Dorsolateral prefrontal cortex (tissue), 120 donors: ENCODE measurements at regions of chr6 and their contacts with region 1.

Region 1: DNA sequence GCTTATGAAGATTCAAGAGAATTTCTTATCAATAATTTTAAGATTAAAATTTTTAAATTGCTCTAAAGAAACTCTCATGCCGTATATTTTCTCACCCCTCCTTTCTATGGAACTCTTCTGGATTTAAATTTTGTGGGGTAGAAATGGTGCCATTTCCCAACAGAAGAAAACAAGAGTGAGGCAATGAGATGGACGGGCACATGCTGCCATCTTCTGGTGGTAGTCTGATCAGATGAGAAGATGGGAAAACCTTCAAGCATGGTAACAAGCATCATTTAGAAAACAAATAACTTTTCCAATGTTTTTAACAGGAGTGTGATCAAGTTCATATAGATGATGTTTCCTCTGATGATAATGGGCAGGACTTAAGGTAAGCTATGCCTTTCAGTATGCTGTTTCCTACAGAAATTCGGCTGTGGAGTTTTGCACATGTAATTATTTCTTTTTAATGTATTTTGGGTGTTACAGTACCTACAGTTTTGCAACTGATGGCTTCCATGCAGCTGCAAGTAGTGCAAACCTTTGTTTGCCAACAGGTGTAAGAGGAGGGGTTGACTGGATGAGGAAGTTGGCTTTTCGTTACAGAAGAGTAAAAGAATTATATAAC is 271.4 kb downstream of the EYA4 start:
- DNase-seq: peak in 9 of 10 donors; percentile 24 to 77 (median 57)
- H3K4me3 ChIP-seq: no peak overlapping the region
- H3K27ac ChIP-seq: no peak overlapping the region
- H3K27me3 ChIP-seq: peaks cover 0 to 5% (median 0%) of the 10 kb centered on the region in 45 donors
- CTCF ChIP-seq: peak; percentile 35 to 97 (median 81)

Region 2: DNA sequence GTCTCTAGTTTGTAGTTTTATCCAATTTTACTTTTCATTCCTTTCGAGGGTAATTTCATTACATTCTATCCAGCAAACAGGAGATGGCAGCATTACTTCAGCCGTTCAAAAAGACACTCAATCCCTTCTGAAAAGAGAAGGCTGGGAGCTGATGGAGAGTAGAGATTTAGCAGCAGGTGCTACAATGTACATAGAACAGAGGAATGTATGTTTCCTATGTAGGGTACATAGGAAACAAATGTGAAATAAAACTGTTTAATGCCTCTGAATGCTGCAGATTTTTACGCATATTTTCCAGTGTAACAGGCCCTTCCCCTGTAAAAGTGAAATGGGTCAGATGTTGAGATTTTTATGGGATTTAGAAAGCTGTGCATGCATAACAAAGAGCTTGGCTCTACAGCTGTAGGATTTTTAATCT is 682.2 kb before region 1 on chr6:
- intact Hi-C with region 1: loop called (anchors 5 kb)
- DNase-seq: no peak
- H3K4me3 ChIP-seq: no peak overlapping the region
- H3K27ac ChIP-seq: peak overlapping the region in 3 of 59 donors; percentile 12 to 18 (median 14)
- H3K27me3 ChIP-seq: no peaks in the 10 kb centered on the region
- CTCF ChIP-seq: peak; percentile 38 to 85 (median 68)

Region 3: DNA sequence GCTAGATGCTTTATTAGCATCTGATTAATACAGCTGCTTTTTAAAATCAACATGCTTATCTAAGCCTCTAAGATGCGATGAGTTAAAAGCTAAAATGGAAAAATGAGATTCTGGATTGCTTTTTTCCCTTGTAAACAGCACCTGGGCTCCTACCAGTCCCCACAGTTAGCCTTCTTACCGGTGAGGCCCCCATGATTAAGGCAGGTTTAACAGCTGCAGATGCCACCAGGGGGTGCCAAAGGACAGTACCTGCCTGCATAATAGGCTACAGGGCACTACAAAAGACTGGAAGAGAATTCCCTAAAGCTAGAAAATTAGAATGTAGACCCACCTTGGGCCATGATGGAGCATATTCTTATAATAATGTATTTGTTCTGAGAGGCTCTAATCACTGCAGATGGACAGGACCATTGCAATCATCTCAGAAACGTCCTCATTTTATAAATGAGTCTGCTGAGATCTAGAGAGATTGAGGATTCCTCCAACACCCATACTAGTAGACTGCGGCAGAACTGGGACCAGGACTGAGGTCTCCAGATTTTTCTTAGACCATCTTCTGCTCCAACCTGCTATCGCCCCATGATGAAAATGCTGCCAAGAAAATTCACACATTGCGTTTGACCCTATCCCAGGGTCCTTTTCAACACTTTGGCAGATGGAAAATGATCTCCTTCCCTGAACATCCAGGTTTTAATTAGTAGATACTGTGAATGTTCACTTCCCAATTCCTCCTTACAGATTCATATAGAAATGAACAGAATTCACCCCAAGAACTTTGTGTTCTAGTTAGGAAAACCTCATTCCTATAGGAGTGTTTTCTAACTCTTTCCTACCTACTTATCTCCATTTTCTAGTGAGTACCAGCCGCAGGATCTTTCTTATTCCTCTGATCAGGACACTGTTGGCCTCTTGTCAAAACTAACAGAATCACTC is 549.3 kb before region 1 on chr6:
- intact Hi-C with region 1: loop called (anchors 10 kb)
- DNase-seq: peak in 8 of 10 donors; percentile 18 to 71 (median 58)
- H3K4me3 ChIP-seq: no peak overlapping the region
- H3K27ac ChIP-seq: peak overlapping the region in 1 of 59 donors; percentile 14
- H3K27me3 ChIP-seq: no peaks in the 10 kb centered on the region
- CTCF ChIP-seq: peak in 55 of 56 donors; percentile 25 to 83 (median 61)

Region 4: GRCh38 chr6:133184798-133185372 is 327.6 kb before region 1 on chr6:
- intact Hi-C with region 1: loop called (anchors 2 to 10 kb)
- DNase-seq: no peak
- H3K4me3 ChIP-seq: peak overlapping the region in 1 of 59 donors; percentile 21
- H3K27ac ChIP-seq: no peak overlapping the region
- H3K27me3 ChIP-seq: peaks cover 0 to 6% (median 0%) of the 10 kb centered on the region in 45 donors
- CTCF ChIP-seq: peak; percentile 45 to 88 (median 68)

Region 5: DNA sequence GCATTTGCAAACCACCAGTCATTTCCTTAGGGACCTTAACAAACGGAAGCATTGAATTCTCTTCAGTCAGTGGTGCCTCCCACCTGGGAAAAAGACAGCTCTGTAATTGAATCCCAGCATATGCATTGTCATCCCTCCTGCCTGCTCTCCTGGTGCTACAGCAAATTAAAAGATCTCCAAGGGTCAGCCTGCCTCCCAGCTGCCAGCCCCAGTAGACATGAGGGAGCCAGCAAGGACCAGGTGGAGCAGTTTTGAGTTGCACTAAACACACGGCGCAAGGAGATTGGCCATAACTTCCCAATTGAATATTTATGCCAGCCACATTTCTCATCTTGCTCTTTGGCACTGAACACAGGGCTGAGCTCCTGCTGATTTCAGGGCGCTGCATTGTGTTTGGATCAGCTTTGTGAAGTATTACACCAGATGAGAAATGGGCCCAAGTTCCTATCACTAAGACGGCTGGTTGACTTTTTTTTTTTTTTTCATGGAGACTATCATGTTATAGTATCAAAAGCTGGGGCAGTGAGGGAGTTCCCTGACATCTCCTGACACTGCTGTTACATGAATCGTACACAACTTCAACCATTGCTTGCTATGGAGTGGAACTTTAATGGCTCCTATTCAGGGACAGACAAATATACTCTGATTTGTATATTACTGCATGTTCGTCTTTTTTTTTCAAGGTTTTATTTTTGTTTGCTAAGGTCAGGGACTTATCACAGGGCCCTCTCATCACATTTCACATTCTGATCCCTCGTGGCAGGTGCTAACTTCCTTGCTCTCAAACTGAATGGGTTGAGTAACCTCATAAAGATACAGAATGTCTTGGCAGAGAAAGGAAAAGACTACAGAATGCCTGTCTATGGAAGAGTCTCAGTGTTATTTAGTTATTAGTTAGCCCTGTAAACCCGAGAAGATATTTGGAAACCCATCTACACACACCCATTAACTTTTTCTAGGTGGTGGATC is 80.2 kb before region 1 on chr6:
- intact Hi-C with region 1: no loop called
- DNase-seq: no peak
- H3K4me3 ChIP-seq: no peak overlapping the region
- H3K27ac ChIP-seq: no peak overlapping the region
- H3K27me3 ChIP-seq: peaks cover 0 to 7% (median 0%) of the 10 kb centered on the region in 45 donors
- CTCF ChIP-seq: no peak